GM10248 (cell line): ENCODE measurements at regions of chr4 and their contacts with region 1.

Region 1: DNA sequence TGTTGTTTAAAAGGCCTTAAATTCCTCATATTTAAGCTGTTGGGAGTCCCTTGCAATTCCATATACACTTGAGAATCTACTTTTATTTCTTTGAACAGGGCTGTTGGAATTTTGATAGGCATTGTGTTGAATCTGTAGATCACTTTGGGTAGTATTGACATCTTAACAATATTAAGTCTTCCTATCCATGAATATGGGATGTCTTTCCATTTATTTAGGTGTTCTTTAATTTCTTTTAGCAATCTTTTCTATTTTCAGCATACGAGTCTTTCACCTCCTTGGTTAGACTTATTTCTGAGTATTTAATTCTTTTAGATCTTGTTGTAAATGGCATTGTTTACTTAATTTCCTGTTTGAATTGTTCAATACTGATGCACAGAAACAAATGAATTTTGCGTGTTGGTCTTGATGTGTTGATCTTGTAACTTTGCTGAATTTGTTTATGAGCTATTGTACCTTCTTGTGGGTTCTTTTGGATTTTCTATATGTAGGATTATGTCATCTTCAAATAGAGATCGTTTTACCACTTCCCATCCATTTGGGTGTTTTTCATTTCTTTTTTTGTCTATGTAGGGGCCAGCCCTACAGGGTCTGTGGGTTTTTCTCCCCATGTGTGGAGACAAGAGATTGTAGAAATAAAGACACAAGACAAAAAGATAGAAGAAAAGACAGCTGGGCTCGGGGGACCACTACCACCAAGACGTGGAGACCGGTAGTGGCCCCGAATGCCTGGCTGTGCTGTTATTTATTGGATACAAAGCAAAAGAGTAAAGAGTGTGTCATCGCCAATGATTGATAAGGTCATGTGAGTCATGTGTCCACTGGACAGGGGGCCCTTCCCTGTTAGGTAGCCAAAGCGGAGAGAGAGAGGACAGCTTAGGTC is 18.2 kb upstream of the CTBP1 start:
- DNase-seq: no peak
- CTCF ChIP-seq: no peak

Region 2: DNA sequence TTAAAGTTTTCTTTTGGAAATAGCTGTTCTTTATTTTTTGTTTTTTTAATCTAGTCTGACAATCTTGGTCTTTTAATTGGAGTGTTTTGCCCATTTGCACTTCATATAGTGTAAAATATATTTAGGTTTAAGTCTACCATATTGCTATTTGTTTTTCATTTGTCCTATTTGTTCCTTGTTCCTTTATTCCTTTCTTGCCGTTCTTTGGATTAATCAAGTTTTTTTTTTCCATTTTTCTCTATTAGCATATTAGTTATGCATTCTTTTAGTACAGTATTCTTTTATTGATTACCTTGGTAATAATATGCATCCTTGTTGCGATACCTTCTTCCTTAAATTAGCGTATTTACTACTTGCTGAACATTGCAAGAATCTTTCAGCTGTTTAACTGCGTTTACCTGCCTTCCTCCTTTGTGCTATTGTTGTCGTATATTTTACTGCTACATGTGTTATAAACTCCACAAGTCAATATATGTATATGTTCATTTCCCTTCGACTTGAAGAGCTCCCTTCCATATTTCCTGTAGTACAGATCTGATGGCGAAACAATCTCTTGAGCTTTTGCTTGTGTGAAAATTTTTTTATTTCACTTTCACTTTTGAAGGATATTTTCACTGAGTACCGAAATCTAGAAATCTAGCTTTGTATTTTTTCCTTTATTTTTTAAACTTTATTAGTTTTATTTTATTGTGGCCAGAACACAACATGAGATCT is 129.9 kb before region 1 on chr4:
- CTCF ChIA-PET with region 1: interaction called, 12 read pairs
- POLR2A ChIA-PET with region 1: no interaction called
- DNase-seq: no peak
- CTCF ChIP-seq: no peak

Region 3: DNA sequence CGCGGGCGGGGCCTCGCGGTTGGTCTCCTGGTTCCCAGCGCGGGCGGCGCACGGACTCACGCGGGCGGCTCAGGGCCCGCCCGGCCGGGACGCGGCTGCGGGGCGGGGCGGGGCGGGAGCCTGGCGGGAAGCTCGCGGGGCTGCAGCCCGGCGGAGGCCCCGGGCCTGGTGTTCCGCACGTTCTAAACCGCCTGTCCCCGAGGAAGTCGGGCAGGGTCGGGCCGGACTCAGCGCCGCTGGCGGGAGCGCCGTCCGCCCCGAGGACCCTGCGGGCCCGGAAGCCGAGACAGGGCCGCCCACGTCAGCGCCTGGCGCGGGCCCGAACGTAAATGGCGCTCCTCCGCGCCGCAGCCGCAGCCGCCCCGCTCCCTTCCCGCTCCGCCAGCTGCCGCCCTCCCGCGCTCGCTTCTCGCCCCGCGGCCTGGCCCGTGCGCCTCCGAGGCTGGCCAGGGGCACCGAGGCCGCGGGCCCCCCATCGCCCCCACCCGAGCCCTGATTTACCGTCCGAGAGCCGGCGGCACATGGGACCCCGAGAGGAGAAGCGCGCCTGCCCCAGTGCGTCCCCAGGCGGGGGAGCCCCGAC is 17.9 kb before region 1 on chr4:
- CTCF ChIA-PET with region 1: interaction called, 58 read pairs
- POLR2A ChIA-PET with region 1: no interaction called
- DNase-seq: peak; percentile 88
- CTCF ChIP-seq: peak; percentile 8

Region 4: GRCh38 chr4:1289207-1290164 is 22.4 kb after region 1 on chr4 and contains the start of gene MAEA:
- CTCF ChIA-PET with region 1: interaction called, 31 read pairs
- POLR2A ChIA-PET with region 1: no interaction called
- DNase-seq: peak; percentile 100
- CTCF ChIP-seq: no peak